ENCODE measurements at regions of chr19 and their contacts with region 1.

Region 1: GRCh38 chr19:55141696-55142095 is 7.3 kb downstream of the TNNT1 start:
- DNase-seq: no peak
- H3K4me3 ChIP-seq: no peak overlapping the region
- H3K4me3 Mint-ChIP-seq: no peak overlapping the region
- H3K27ac ChIP-seq: no peak overlapping the region
- H3K27ac Mint-ChIP-seq: no peak overlapping the region
- H3K4me1 ChIP-seq: no peaks in the 10 kb centered on the region
- H3K4me1 Mint-ChIP-seq: peaks cover 0 to 9% (median 0%) of the 10 kb centered on the region in 3 donors
- H3K27me3 ChIP-seq: peaks cover 27% of the 10 kb centered on the region
- H3K27me3 Mint-ChIP-seq: peaks cover 51 to 53% of the 10 kb centered on the region in 2 donors

Region 2: DNA sequence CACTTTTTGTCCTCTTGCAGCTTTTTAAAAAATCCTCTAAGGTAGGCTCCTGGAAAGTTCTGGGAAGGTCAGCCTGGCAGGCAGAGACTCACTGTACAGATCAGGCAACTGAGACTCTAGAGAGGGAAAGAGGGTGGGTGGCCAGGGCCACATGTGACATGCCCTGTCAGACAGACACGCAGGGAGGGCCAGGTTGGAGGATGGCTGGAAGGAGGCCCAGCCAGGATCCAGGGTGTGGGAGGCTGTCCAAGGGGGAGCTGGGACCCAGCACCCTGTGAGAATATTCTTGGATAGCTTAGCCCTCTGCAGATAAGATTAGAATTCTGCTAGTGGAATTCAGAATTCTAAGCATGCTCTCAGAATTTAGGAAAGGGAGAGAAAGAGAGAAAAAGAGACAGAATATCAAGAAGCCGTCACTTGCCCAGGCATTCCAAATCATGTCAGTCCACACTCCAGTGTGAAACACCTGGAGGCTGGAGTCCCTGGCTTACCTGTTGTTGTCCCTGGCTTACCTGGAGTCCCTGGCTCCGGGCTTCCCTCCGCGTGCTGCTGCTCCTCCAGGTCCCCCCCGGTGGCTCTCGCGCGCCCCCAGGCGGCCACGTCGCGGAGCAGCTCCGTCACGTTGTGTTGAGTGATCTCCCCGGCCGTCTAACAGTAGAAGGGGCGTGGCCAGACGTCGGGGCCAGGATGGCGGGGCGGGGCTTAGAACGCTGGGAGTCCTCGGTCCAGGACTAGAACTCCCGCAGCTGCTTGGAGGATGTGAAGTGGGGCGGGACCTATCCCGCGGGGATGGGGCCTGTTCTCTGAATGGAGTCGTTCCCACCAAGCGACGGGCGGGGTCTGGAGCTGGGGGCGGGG is 18.7 kb after region 1 on chr19:
- CTCF ChIA-PET with region 1: interaction called, 11 read pairs
- POLR2A ChIA-PET with region 1: no interaction called
- DNase-seq: peak; percentile 79 to 87 (median 80)
- H3K4me3 ChIP-seq: no peak overlapping the region
- H3K4me3 Mint-ChIP-seq: peak overlapping the region in 2 of 7 donors; percentile 15 to 70
- H3K27ac ChIP-seq: peak overlapping the region; percentile 1
- H3K27ac Mint-ChIP-seq: peak overlapping the region in 2 of 8 donors; percentile 29 to 43
- H3K4me1 ChIP-seq: peaks cover 5% of the 10 kb centered on the region
- H3K4me1 Mint-ChIP-seq: peaks cover 5 to 6% (median 5%) of the 10 kb centered on the region in 3 donors
- H3K27me3 ChIP-seq: peaks cover 6% of the 10 kb centered on the region
- H3K27me3 Mint-ChIP-seq: peaks cover 47 to 57% of the 10 kb centered on the region in 2 donors

Region 3: GRCh38 chr19:55241143-55242088 is 99.7 kb after region 1 on chr19:
- CTCF ChIA-PET with region 1: no interaction called
- POLR2A ChIA-PET with region 1: no interaction called
- DNase-seq: no peak
- H3K4me3 ChIP-seq: no peak overlapping the region
- H3K4me3 Mint-ChIP-seq: no peak overlapping the region
- H3K27ac ChIP-seq: no peak overlapping the region
- H3K27ac Mint-ChIP-seq: peak overlapping the region in 1 of 8 donors; percentile 91
- H3K4me1 ChIP-seq: no peaks in the 10 kb centered on the region
- H3K4me1 Mint-ChIP-seq: peaks cover 2 to 4% (median 3%) of the 10 kb centered on the region in 3 donors
- H3K27me3 ChIP-seq: no peaks in the 10 kb centered on the region
- H3K27me3 Mint-ChIP-seq: no peaks in the 10 kb centered on the region

Region 4: GRCh38 chr19:55418185-55418584 is 276.5 kb after region 1 on chr19:
- CTCF ChIA-PET with region 1: interaction called, 14 read pairs
- POLR2A ChIA-PET with region 1: interaction called, 3 read pairs
- DNase-seq: peak; percentile 29 to 70 (median 42)
- H3K4me3 ChIP-seq: no peak overlapping the region
- H3K4me3 Mint-ChIP-seq: no peak overlapping the region
- H3K27ac ChIP-seq: no peak overlapping the region
- H3K27ac Mint-ChIP-seq: peak overlapping the region in 2 of 8 donors; percentile 7 to 77
- H3K4me1 ChIP-seq: peaks cover 26% of the 10 kb centered on the region
- H3K4me1 Mint-ChIP-seq: peaks cover 6 to 25% (median 22%) of the 10 kb centered on the region in 3 donors
- H3K27me3 ChIP-seq: no peaks in the 10 kb centered on the region
- H3K27me3 Mint-ChIP-seq: peaks cover 2 to 13% of the 10 kb centered on the region in 2 donors